ENCODE measurements at regions of chr17 and their contacts with region 1.

Region 1: DNA sequence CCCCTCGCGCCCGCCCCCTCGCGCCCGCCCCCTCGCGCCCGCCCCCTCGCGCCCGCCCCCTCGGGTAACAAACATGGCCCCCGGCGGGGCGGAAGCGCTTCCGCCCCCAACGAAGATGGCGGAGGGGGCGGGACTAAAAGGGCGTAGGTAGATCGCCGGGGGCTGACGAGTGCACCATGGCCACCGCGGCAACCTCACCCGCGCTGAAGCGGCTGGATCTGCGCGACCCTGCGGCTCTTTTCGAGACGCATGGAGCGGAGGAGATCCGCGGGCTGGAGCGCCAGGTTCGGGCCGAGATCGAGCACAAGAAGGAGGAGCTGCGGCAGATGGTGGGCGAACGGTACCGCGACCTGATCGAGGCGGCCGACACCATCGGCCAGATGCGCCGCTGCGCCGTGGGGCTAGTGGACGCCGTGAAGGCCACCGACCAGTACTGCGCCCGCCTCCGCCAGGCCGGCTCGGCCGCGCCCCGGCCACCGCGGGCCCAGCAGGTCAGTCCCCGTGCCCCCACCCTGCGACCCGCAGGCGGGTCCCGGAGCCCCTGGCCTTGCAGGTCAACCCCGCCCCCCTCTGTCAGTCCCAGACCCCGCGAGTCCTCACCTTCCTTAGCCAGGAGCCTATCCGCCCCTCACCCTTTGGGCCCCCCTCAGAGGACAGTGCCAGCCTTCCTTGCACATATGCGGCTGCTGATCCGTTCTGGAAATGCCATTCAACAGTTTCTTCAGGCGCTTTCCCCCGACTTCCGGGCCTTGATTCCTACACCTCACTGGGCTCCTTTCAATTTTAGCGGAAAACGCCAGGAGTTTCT is at the start of gene COG1:
- DNase-seq: peak; percentile 77

Region 2: DNA sequence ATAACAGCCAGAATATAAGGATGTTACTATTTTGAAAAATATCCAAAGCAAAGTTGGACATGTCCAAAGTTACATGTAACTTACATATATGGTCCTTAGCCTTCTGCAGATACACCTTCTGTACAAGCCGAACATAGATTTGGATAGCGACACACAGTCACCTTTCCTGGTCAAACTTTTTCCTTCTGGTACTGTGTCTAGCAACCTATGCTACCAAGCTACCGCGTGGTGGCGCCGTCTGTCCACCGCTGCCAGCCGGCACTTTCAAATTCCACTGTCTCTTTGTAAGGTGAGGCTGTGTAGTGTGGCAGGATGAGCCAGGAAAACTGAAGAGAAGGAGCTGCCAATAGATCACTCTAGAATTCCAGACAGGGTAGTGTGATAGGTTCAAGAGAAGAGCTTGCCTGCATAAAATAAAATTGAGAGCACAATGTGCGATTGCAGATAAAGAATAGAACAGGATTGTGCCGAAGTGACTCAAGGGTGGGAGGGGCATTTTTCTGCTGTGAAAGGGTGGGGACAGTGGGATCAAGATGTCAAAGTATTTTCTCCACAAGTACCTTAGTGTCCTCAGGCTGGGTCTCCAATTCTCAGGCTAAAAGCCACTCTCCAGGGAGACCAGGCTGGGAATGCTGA is 467.5 kb before region 1 on chr17:
- in situ Hi-C with region 1: loop called (anchors 25 kb)
- DNase-seq: peak; percentile 57